ENCODE measurements at regions of chr2 and their contacts with region 1.

Region 1: DNA sequence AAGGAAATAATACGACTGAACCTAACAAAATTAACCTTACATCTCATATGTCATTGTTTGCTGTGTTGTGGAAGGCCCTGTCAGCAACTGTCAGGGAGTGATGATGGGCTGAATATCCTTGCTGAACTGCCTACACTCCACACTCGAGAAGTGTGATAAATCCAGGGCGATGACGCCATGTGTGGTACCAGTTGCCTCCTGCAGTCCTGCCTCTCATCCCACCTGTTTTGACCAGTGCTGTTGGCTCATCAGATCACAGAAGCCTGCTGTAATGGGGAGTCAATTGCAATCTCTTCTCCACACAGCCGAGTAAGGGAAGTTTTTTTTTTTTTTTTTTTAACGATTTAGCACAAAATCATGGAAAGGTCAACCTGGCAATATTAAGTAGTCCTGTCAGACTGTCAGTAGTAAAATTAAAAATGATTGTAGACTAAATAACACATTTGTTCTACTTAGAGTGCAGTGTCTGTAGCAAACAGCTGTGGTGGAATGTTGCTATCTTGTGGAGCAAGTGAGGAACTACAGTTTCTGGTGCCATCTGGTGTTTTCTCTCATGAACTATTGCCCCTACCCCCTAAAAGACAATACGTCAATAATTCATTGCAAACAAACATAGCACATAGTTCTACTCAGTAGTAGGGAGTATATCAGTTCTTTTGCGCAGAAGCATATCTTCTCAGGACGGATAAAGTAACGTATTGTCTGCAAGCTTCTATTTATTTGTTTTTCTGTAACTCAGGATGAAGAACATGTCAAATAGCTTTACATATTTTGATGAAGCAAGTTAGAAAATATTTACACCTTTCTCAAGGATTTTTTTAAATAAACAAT is 347.6 kb downstream of the CTNNA2 start:
- DNase-seq: peak; percentile 27
- H3K4me3 Mint-ChIP-seq: no peak overlapping the region
- H3K27ac Mint-ChIP-seq: no peak overlapping the region
- H3K4me1 Mint-ChIP-seq: no peaks in the 10 kb centered on the region
- H3K27me3 Mint-ChIP-seq: peaks cover 2% of the 10 kb centered on the region
- CTCF ChIP-seq: peak; percentile 80

Region 2: GRCh38 chr2:79041032-79041448 is 819.4 kb before region 1 on chr2:
- CTCF ChIA-PET with region 1: interaction called, 21 read pairs
- POLR2A ChIA-PET with region 1: no interaction called
- intact Hi-C with region 1: loop called (anchors 1 kb)
- DNase-seq: no peak
- H3K4me3 Mint-ChIP-seq: no peak overlapping the region
- H3K27ac Mint-ChIP-seq: no peak overlapping the region
- H3K4me1 Mint-ChIP-seq: no peaks in the 10 kb centered on the region
- H3K27me3 Mint-ChIP-seq: no peaks in the 10 kb centered on the region
- CTCF ChIP-seq: peak; percentile 34

Region 3: DNA sequence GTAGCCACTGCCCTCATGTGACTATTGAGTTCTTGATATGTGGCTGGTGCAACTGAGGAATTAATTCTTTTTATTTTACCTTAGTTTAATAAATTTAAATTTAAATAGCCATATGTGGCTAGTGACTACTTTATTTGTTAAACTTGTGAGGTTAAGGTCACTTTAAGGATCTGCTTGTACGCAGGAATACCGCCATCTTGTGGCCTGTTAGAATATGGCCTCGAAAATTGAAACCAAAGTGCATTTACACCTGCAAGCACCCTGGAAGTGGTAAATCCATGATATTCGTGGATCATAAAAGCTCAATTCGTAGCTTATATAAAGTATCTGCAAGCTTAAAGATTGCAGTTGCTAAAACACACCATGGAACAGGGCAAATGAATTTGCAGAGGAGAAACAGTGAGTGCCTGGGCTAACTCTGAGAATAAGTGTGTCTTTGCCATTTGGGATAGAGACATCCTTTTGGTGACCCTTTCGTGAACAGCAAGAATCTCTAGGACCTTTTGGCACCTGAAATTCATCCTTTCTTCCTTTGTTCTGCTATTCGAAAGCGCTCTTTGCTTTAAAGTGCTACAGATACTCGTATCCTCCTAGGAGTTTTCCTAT is 641.0 kb before region 1 on chr2:
- CTCF ChIA-PET with region 1: interaction called, 22 read pairs
- POLR2A ChIA-PET with region 1: interaction called, 3 read pairs
- intact Hi-C with region 1: loop called (anchors 1 kb)
- DNase-seq: peak; percentile 40
- H3K4me3 Mint-ChIP-seq: no peak overlapping the region
- H3K27ac Mint-ChIP-seq: no peak overlapping the region
- H3K4me1 Mint-ChIP-seq: peaks cover 18% of the 10 kb centered on the region
- H3K27me3 Mint-ChIP-seq: no peaks in the 10 kb centered on the region
- CTCF ChIP-seq: peak; percentile 77

Region 4: DNA sequence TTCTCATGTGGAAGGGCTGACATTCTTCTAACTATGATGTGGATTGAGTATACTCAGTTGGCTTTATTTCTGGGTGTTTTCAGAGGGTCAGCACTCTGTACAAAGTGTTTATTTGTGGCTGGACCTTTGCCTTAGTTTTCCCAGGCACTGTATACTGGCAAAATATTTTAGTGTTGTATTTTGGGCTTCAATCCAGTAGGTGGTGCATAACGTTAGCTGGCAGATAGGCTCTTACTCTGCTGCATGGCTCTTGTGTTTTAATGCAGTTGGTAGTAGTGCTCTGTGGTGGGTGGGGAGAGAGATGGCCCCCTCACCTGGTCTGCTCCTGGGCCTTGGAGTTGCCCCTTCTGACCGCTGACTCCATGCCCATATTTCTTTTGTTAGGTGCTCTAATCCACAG is 625.3 kb before region 1 on chr2:
- CTCF ChIA-PET with region 1: interaction called, 28 read pairs
- POLR2A ChIA-PET with region 1: no interaction called
- intact Hi-C with region 1: loop called (anchors 5 kb)
- DNase-seq: no peak
- H3K4me3 Mint-ChIP-seq: no peak overlapping the region
- H3K27ac Mint-ChIP-seq: no peak overlapping the region
- H3K4me1 Mint-ChIP-seq: no peaks in the 10 kb centered on the region
- H3K27me3 Mint-ChIP-seq: peaks cover 12% of the 10 kb centered on the region
- CTCF ChIP-seq: peak; percentile 29

Region 5: GRCh38 chr2:79530443-79530842 is 330.0 kb before region 1 on chr2:
- CTCF ChIA-PET with region 1: interaction called, 22 read pairs
- POLR2A ChIA-PET with region 1: interaction called, 3 read pairs
- intact Hi-C with region 1: loop called (anchors 1 kb)
- DNase-seq: peak; percentile 6
- H3K4me3 Mint-ChIP-seq: no peak overlapping the region
- H3K27ac Mint-ChIP-seq: no peak overlapping the region
- H3K4me1 Mint-ChIP-seq: no peaks in the 10 kb centered on the region
- H3K27me3 Mint-ChIP-seq: no peaks in the 10 kb centered on the region
- CTCF ChIP-seq: peak; percentile 24

Region 6: GRCh38 chr2:79660557-79660956 is 199.9 kb before region 1 on chr2:
- CTCF ChIA-PET with region 1: interaction called, 4 read pairs
- POLR2A ChIA-PET with region 1: no interaction called
- intact Hi-C with region 1: loop called (anchors 1 kb)
- DNase-seq: no peak
- H3K4me3 Mint-ChIP-seq: no peak overlapping the region
- H3K27ac Mint-ChIP-seq: no peak overlapping the region
- H3K4me1 Mint-ChIP-seq: peaks cover 6% of the 10 kb centered on the region
- H3K27me3 Mint-ChIP-seq: no peaks in the 10 kb centered on the region
- CTCF ChIP-seq: no peak

Region 7: GRCh38 chr2:79960519-79960918 is 100.1 kb after region 1 on chr2:
- CTCF ChIA-PET with region 1: no interaction called
- POLR2A ChIA-PET with region 1: no interaction called
- intact Hi-C with region 1: no loop called
- DNase-seq: no peak
- H3K4me3 Mint-ChIP-seq: no peak overlapping the region
- H3K27ac Mint-ChIP-seq: no peak overlapping the region
- H3K4me1 Mint-ChIP-seq: no peaks in the 10 kb centered on the region
- H3K27me3 Mint-ChIP-seq: no peaks in the 10 kb centered on the region
- CTCF ChIP-seq: no peak

Measured in MCF 10A (cell line).